Activated CD8-positive, alpha-beta T cell treated with anti-CD3 and anti-CD28 coated beads, Interleukin-2, amount 10 ng/mL, durations not matched to agents 7 days and 5 days (primary cell): ENCODE measurements at regions of chr1 and their contacts with region 1.

Region 1: GRCh38 chr1:39098546-39099250 is 72.5 kb downstream of the NDUFS5 start:
- DNase-seq: peak; percentile 76
- ATAC-seq: peak; percentile 87
- H3K4me3 Mint-ChIP-seq: no peak overlapping the region
- H3K27ac Mint-ChIP-seq: no peak overlapping the region
- H3K4me1 Mint-ChIP-seq: peaks cover 22% of the 10 kb centered on the region
- H3K27me3 Mint-ChIP-seq: peaks cover 2% of the 10 kb centered on the region

Region 2: GRCh38 chr1:38908821-38909220 is 189.9 kb before region 1 on chr1:
- CTCF ChIA-PET with region 1: no interaction called
- POLR2A ChIA-PET with region 1: no interaction called
- DNase-seq: no peak
- ATAC-seq: no peak
- H3K4me3 Mint-ChIP-seq: no peak overlapping the region
- H3K27ac Mint-ChIP-seq: no peak overlapping the region
- H3K4me1 Mint-ChIP-seq: no peaks in the 10 kb centered on the region
- H3K27me3 Mint-ChIP-seq: no peaks in the 10 kb centered on the region

Region 3: DNA sequence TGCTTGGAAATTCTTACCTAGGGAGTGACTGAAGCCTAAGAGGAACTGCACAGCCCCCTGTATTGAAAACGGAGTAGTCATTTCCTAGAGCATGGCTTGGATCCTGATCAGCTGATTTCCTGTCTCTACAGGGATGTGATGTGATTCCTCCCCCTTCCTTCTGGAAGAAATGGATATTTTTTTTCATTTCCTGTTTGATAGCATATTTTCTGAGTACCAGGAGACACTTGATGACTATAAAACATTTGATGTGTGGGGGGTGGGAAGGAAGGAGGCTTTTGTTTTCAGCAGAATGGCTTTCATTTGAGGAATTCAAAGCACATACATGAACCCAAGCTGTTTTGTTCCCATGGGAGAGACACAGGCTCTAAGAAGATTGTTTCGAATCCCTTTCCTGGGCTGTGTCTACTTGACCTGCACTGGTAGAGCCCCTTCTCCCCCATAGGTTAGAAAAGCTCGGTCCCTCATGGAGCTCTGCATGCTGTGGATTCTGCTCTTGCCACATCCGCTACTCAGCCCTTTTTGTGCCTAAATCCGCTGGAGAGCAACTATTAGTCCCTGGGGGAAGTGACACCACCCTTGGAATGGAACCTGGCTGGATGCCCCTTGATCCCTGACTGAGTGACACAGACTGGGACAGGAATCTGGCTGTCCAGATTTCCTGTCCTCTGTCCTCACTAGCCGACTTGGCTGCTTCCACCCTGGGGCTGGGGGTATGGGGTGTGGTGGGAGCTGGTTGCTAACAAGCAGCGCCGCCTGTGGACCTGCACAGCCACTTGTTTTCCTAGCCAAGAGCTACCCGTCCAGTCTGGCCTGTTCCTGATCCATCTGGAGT is 34.0 kb after region 1 on chr1:
- CTCF ChIA-PET with region 1: interaction called, 15 read pairs
- POLR2A ChIA-PET with region 1: no interaction called
- DNase-seq: no peak
- ATAC-seq: no peak
- H3K4me3 Mint-ChIP-seq: no peak overlapping the region
- H3K27ac Mint-ChIP-seq: no peak overlapping the region
- H3K4me1 Mint-ChIP-seq: peaks cover 4% of the 10 kb centered on the region
- H3K27me3 Mint-ChIP-seq: no peaks in the 10 kb centered on the region

Region 4: GRCh38 chr1:39165049-39165448 is 66.4 kb after region 1 on chr1:
- CTCF ChIA-PET with region 1: interaction called, 11 read pairs
- POLR2A ChIA-PET with region 1: no interaction called
- DNase-seq: no peak
- ATAC-seq: no peak
- H3K4me3 Mint-ChIP-seq: no peak overlapping the region
- H3K27ac Mint-ChIP-seq: no peak overlapping the region
- H3K4me1 Mint-ChIP-seq: peaks cover 2% of the 10 kb centered on the region
- H3K27me3 Mint-ChIP-seq: peaks cover 4% of the 10 kb centered on the region

Region 5: GRCh38 chr1:39183503-39184353 is 85.0 kb after region 1 on chr1:
- CTCF ChIA-PET with region 1: interaction called, 283 read pairs
- POLR2A ChIA-PET with region 1: interaction called, 3 read pairs
- DNase-seq: peak; percentile 89
- ATAC-seq: peak; percentile 90
- H3K4me3 Mint-ChIP-seq: peak overlapping the region; percentile 1
- H3K27ac Mint-ChIP-seq: peak overlapping the region; percentile 84
- H3K4me1 Mint-ChIP-seq: peaks cover 45% of the 10 kb centered on the region
- H3K27me3 Mint-ChIP-seq: no peaks in the 10 kb centered on the region

Region 6: DNA sequence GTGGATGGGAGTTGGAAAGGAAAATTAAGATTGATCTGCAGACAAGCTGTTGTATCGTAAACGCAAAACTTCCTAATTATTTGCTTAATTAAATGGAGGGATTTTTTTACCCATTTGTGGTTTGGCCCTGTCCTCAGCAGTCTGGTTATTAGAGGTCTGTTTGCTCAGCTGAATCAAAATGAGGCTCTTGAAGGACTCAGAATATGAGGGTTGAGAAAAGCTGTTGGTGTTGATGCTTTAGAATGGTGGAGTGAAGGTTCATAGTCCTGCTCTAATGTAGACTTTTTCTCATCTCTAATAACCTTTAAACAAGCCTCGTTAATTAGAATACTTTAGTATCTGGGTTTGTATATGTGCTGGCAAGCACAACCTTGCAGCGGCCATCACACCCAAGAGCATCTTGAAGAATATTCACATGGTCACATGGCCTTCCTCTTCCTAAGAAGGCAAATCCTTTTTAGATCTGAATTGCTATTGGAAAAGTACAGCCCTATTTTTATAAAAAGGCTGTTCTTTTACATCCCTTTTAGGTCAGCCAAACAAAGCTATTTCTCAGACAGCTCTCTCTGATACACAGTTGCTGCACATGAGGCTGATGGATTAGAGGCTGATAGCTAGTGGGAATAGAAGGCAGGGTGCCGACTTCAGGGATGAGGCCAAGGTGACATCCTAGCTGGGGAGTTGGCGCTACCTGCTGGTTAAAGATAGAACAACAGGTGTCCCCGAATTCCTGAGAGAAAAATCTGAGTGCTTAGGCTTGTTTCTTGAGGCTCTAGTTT is 159.6 kb after region 1 on chr1:
- CTCF ChIA-PET with region 1: interaction called, 25 read pairs
- POLR2A ChIA-PET with region 1: no interaction called
- DNase-seq: peak; percentile 69
- ATAC-seq: peak; percentile 57
- H3K4me3 Mint-ChIP-seq: no peak overlapping the region
- H3K27ac Mint-ChIP-seq: no peak overlapping the region
- H3K4me1 Mint-ChIP-seq: peaks cover 27% of the 10 kb centered on the region
- H3K27me3 Mint-ChIP-seq: no peaks in the 10 kb centered on the region

Region 7: DNA sequence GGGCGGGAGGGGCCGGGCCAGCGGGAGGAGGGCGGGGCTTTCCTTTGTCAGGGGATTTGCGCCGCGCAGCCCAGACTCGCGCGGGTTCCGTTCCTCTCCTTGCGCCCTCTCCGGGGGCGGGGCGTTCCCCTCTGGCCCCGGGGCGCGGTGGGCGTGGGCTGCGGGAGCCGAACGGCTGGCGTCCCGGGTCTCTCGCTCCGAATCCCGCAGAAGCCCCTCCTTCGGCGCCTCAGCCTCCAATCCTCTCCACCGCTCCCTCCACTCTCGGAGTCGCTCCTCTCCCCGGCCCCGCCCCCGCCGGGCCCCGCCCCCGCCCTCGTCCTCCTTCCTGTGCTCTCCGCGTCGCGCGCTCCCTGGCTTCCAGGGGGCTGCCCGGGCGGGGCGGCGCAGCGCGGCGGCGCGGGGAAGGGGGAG is 309.9 kb after region 1 on chr1:
- CTCF ChIA-PET with region 1: interaction called, 24 read pairs
- POLR2A ChIA-PET with region 1: no interaction called
- DNase-seq: peak; percentile 89
- ATAC-seq: peak; percentile 89
- H3K4me3 Mint-ChIP-seq: peak overlapping the region; percentile 84
- H3K27ac Mint-ChIP-seq: no peak overlapping the region
- H3K4me1 Mint-ChIP-seq: peaks cover 51% of the 10 kb centered on the region
- H3K27me3 Mint-ChIP-seq: no peaks in the 10 kb centered on the region

Region 8: GRCh38 chr1:39538588-39539465 is 440.1 kb after region 1 on chr1:
- CTCF ChIA-PET with region 1: interaction called, 10 read pairs
- POLR2A ChIA-PET with region 1: no interaction called
- DNase-seq: peak; percentile 66
- ATAC-seq: peak; percentile 91
- H3K4me3 Mint-ChIP-seq: no peak overlapping the region
- H3K27ac Mint-ChIP-seq: no peak overlapping the region
- H3K4me1 Mint-ChIP-seq: no peaks in the 10 kb centered on the region
- H3K27me3 Mint-ChIP-seq: no peaks in the 10 kb centered on the region